ENCODE measurements at regions of chr17 and their contacts with region 1.

Region 1: DNA sequence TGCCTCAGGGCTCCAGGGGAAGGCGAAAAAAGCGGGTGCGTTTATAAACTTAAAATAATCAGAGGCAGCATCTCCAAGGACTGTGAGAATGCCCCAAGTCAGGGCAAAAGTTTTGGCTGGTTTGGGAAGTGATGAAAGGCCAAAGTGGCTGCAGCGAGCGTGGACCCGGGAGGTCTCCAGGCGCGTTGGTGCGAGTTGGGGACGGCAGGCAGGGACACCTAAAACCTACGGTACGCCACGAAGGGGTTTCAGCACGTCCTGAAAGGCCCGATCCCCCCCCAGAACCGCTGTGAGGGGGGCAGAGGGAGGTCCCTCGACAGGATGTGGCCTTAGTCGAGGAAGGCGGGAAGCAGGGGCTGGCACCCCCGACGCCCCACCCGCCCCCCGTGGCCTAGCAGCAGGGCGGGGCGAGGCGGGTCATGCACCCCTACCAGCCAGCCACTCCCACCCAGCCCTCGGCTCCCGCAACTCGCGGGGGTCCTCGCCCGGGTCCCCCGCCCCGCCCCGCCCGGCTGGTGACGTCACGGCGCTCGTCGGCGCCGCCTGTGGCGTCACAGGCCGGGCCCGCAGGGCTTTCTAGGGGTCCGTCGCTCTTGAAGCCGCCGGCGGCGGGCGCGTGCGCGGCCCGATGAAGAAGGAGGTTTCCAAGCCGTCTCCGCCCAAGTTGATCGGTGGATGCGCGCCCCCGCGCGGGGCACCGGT is at the start of gene MYCBPAP:
- DNase-seq: peak; percentile 82
- H3K4me3 Mint-ChIP-seq: peak within 1 kb of the TSS; percentile 91
- H3K27ac Mint-ChIP-seq: peak within 1 kb of the TSS; percentile 91
- H3K4me1 Mint-ChIP-seq: peaks cover 62% of the 10 kb centered on the region
- H3K27me3 Mint-ChIP-seq: peaks cover 5% of the 10 kb centered on the region
- total RNA-seq, gene MYCBPAP: 2.6 and 3.8 TPM in 2 replicates

Region 2: DNA sequence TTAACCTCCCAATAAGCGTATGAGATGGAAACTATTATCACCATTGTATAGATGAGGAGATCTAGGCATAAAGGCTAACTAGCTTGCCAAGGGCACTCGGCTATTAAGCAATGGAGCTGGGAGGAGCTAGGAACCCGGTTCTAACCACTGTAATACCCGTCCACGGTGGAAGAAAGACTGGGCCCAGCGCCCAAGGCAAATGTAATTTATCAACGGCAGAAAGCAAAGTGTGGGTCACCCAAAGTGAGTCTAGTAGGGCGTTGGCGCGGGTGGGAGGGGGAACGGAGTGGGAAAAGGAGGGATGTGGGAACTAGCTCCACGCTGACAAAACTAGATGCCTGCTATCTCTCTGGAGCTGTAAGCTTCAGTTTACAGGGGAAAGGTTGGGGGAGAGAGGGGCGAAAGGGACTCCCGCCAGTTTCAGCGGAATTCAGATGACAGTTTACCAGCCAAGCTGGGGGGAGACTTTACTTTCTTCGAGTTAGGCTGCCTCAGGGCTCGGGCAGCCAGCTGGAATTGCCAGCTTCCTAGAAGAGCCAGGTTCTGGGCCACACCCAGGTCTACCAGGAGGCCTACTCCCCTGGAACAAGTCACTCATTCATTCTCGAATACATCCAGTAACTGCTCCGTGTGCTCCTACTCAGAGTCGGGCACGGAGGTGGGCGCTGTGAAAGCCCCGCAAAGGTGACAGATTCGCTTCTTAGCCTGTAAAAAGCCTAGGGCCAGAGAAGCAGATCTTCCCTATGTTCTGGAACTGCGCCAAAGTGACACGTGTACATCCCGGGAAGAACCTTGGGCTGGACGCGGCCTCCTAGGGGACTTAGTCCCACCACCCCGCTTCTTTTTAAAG is 111.5 kb before region 1 on chr17:
- intact Hi-C with region 1: no loop called
- DNase-seq: no peak
- H3K4me3 Mint-ChIP-seq: peak overlapping the region; percentile 99
- H3K27ac Mint-ChIP-seq: peak overlapping the region; percentile 96
- H3K4me1 Mint-ChIP-seq: peaks cover 34% of the 10 kb centered on the region
- H3K27me3 Mint-ChIP-seq: no peaks in the 10 kb centered on the region

Region 3: DNA sequence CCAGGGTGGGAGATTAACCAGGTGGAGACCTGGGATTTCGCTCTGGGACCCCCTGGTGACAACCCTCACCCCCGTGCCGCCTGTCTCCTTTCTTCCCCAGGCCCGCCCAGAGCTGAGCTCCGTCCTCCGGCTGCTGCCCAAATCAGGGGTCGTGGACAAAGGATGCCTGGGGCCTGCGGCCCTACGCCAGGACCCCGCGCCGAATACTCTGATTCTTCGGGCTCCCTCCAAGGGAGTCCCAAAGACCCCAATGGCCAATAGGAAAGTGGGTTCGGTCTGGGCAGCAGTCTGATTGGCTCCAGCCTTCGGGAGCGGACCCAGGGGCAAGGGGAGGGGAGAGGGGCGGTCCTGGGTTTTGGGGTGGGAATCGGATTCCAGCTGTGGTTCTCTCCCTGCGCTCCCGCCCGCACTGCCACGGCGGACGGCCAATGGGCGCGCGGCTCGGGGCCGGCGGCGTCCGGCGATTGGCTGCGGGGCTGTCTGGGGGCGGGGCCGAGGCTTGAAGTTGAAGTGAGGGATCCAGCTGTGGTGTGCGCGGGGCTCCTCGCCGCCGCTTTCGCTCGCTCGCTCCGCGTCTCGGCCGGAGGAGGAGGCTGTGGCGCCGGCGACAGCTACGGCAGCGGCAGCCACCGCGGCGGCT is 52.3 kb after region 1 on chr17 and contains the start of gene CACNA1G:
- intact Hi-C with region 1: loop called (anchors 5 kb)
- DNase-seq: peak; percentile 87
- H3K4me3 Mint-ChIP-seq: peak within 1 kb of the TSS; percentile 70
- H3K27ac Mint-ChIP-seq: no peak within 1 kb of the TSS
- H3K4me1 Mint-ChIP-seq: peaks cover 11% of the 10 kb centered on the region
- H3K27me3 Mint-ChIP-seq: peaks cover 59% of the 10 kb centered on the region
- total RNA-seq, gene CACNA1G: 0.05 and 0.07 TPM in 2 replicates

Region 4: DNA sequence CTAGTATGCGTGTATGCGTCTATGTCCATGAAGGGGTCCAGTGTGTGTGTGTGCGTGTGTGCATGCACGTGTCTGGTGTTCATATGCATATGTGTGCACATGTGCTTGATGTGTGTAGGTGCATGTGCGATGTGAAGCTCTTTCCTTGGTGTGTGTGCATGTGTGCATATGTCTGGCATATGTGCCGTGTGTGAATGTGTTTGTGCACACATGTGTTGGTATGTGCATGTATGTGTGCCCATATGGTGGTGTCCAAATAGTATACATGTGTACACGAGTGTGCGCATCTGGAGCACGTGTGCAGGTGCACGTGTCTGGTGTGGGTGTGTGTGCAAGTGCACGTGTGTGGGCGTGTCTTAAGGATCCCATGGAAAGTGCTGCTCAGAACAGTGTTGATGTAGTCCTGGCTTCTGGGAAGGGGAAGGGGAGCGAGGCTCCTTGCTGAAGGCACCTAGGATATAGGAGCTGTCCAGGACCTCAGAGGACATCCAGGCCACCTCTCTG is 69.5 kb after region 1 on chr17:
- intact Hi-C with region 1: no loop called
- DNase-seq: no peak
- H3K4me3 Mint-ChIP-seq: no peak overlapping the region
- H3K27ac Mint-ChIP-seq: no peak overlapping the region
- H3K4me1 Mint-ChIP-seq: no peaks in the 10 kb centered on the region
- H3K27me3 Mint-ChIP-seq: peaks cover 14% of the 10 kb centered on the region

Region 5: DNA sequence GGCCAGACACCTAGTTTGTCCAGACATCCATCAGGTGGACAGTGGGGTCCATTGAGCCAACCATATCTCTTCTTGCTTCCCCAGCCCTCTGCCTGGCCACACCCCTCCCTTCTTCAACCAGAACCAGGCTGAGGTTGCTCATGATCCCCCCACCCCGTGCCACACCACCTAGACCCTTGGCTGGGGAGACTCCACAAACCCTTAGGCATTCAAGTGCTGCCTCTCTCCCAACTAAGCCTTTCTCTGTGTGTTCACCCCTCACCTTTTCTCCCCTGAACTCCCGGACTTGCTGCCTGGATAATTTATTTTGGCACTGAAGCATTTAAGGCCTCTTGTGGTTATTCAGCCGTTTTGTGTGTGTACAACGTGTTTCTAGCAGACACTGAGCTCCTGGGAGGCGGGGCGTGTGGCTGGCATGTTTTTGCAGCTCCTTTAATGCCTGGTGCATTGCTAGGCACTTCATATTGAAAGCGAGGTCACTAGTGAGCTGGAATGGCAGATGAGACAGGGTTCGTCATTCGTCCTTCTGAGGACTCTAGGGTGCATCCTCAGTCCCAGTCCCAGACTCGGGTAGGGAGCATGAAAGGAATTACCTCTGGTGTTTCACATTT is 81.2 kb after region 1 on chr17:
- intact Hi-C with region 1: no loop called
- DNase-seq: no peak
- H3K4me3 Mint-ChIP-seq: no peak overlapping the region
- H3K27ac Mint-ChIP-seq: no peak overlapping the region
- H3K4me1 Mint-ChIP-seq: no peaks in the 10 kb centered on the region
- H3K27me3 Mint-ChIP-seq: peaks cover 8% of the 10 kb centered on the region